ENCODE measurements at regions of chr5 and their contacts with region 1.

Region 1: GRCh38 chr5:158084292-158084691 is 225.3 kb upstream of the CLINT1 start:
- DNase-seq: peak; percentile 74
- H3K4me3 Mint-ChIP-seq: no peak overlapping the region
- H3K27ac Mint-ChIP-seq: peak overlapping the region; percentile 1
- H3K4me1 Mint-ChIP-seq: peaks cover 22% of the 10 kb centered on the region
- H3K27me3 Mint-ChIP-seq: no peaks in the 10 kb centered on the region
- CTCF ChIP-seq: no peak

Region 2: GRCh38 chr5:157366741-157367674 is 717.3 kb before region 1 on chr5:
- CTCF ChIA-PET with region 1: no interaction called
- POLR2A ChIA-PET with region 1: no interaction called
- intact Hi-C with region 1: no loop called
- DNase-seq: peak; percentile 54
- H3K4me3 Mint-ChIP-seq: no peak overlapping the region
- H3K27ac Mint-ChIP-seq: no peak overlapping the region
- H3K4me1 Mint-ChIP-seq: no peaks in the 10 kb centered on the region
- H3K27me3 Mint-ChIP-seq: no peaks in the 10 kb centered on the region
- CTCF ChIP-seq: peak; percentile 14

Region 3: GRCh38 chr5:158054223-158055110 is 29.8 kb before region 1 on chr5:
- CTCF ChIA-PET with region 1: interaction called, 5 read pairs
- POLR2A ChIA-PET with region 1: interaction called, 10 read pairs
- intact Hi-C with region 1: no loop called
- DNase-seq: peak; percentile 21
- H3K4me3 Mint-ChIP-seq: peak overlapping the region; percentile 19
- H3K27ac Mint-ChIP-seq: peak overlapping the region; percentile 55
- H3K4me1 Mint-ChIP-seq: peaks cover 55% of the 10 kb centered on the region
- H3K27me3 Mint-ChIP-seq: no peaks in the 10 kb centered on the region
- CTCF ChIP-seq: no peak

Region 4: GRCh38 chr5:158301166-158301565 is 216.9 kb after region 1 on chr5:
- CTCF ChIA-PET with region 1: no interaction called
- POLR2A ChIA-PET with region 1: no interaction called
- intact Hi-C with region 1: no loop called
- DNase-seq: no peak
- H3K4me3 Mint-ChIP-seq: no peak overlapping the region
- H3K27ac Mint-ChIP-seq: no peak overlapping the region
- H3K4me1 Mint-ChIP-seq: no peaks in the 10 kb centered on the region
- H3K27me3 Mint-ChIP-seq: no peaks in the 10 kb centered on the region
- CTCF ChIP-seq: no peak

Region 5: GRCh38 chr5:158573829-158574228 is 489.5 kb after region 1 on chr5:
- CTCF ChIA-PET with region 1: no interaction called
- POLR2A ChIA-PET with region 1: no interaction called
- intact Hi-C with region 1: no loop called
- DNase-seq: no peak
- H3K4me3 Mint-ChIP-seq: no peak overlapping the region
- H3K27ac Mint-ChIP-seq: no peak overlapping the region
- H3K4me1 Mint-ChIP-seq: no peaks in the 10 kb centered on the region
- H3K27me3 Mint-ChIP-seq: no peaks in the 10 kb centered on the region
- CTCF ChIP-seq: no peak

Measured in MCF 10A (cell line).